GM10248 (cell line): ENCODE measurements at regions of chr2 and their contacts with region 1.

Region 1: GRCh38 chr2:60312618-60313017 is 240.8 kb downstream of the BCL11A start:
- DNase-seq: peak; percentile 70
- CTCF ChIP-seq: no peak

Region 2: GRCh38 chr2:60283626-60284025 is 29.0 kb before region 1 on chr2:
- CTCF ChIA-PET with region 1: no interaction called
- POLR2A ChIA-PET with region 1: no interaction called
- DNase-seq: no peak
- CTCF ChIP-seq: no peak

Region 3: GRCh38 chr2:60302377-60303141 is 10.1 kb before region 1 on chr2:
- CTCF ChIA-PET with region 1: interaction called, 19 read pairs
- POLR2A ChIA-PET with region 1: no interaction called
- DNase-seq: no peak
- CTCF ChIP-seq: no peak